A673 (cell line): ENCODE measurements at regions of chr3 and their contacts with region 1.

Region 1: GRCh38 chr3:158845765-158846350 is 44.0 kb downstream of the MFSD1 start:
- DNase-seq: peak; percentile 41
- H3K4me3 ChIP-seq: no peak overlapping the region
- H3K27ac ChIP-seq: no peak overlapping the region
- H3K4me1 ChIP-seq: no peaks in the 10 kb centered on the region
- H3K27me3 ChIP-seq: peaks cover 13% of the 10 kb centered on the region
- CTCF ChIP-seq: peak; percentile 73

Region 2: DNA sequence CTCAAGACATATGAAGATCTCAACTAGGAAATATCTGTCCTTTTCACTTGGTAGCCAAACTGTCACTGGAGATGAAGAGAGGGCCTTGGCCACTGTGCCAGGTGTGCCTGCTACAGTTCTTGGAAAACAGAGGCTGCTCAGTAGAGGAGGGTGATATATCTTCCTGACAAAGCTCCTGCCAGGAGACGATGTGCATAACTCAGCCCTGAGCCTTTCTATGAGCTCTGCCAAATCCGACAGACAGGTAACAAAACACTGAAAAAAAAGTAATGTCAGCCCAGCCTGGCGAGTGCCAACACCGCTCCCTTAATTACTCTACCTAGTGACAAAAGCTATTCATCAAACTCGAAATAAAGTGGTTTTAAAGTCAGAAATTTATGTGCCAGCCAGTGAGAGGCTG is 79.2 kb after region 1 on chr3:
- CTCF ChIA-PET with region 1: no interaction called
- POLR2A ChIA-PET with region 1: no interaction called
- intact Hi-C with region 1: no loop called
- DNase-seq: no peak
- H3K4me3 ChIP-seq: no peak overlapping the region
- H3K27ac ChIP-seq: no peak overlapping the region
- H3K4me1 ChIP-seq: no peaks in the 10 kb centered on the region
- H3K27me3 ChIP-seq: no peaks in the 10 kb centered on the region
- CTCF ChIP-seq: no peak

Region 3: DNA sequence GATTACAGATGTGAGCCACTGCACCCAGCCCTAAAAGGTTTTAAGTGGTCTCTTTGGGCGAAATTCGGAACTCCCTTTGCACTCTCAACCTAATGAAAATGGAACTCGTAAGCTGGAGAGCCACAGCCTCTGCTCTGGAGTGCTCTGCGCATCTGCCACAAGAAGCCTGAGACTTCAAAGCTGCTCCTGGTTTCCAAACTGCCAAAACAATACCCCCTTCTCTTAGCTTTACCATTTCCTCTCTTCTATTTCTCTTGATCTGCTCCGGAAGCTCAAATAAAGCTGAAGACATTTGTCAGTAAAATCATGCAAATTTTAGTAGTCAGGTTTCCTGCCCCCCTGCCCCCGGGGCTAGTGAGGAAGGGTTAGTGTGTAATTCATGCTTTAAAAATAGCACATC is 268.7 kb after region 1 on chr3:
- CTCF ChIA-PET with region 1: no interaction called
- POLR2A ChIA-PET with region 1: no interaction called
- intact Hi-C with region 1: no loop called
- DNase-seq: peak; percentile 5
- H3K4me3 ChIP-seq: no peak overlapping the region
- H3K27ac ChIP-seq: no peak overlapping the region
- H3K4me1 ChIP-seq: no peaks in the 10 kb centered on the region
- H3K27me3 ChIP-seq: peaks cover 3% of the 10 kb centered on the region
- CTCF ChIP-seq: no peak

Region 4: DNA sequence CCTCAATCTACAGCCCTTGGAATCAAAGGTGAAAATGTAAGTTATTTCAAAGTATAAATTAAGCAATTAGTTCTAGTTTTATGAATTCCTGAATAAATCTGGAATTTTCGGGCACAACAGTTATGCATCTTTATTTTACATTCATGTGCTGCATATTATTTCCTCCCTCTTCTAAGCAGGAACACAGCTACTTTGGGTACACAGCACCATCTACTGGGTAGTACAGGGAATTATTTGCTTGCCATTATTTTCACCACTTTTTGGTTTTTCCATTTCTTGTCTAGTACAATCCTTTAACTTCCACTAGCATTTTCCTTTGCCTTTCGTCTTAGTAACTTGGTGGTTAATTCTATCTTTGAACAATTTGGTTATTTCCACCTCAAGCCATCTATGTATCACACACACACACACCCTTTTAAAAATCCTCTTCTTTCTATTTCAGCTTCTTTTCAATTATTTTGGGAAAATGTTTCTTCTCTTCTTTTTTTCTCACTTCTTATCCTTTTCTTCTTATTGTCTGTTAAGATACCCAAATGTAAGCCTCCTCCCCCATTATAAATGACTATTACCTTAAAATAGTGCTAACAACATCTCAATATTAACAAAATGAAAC is 407.0 kb after region 1 on chr3:
- CTCF ChIA-PET with region 1: no interaction called
- POLR2A ChIA-PET with region 1: no interaction called
- intact Hi-C with region 1: loop called (anchors 2 kb)
- DNase-seq: peak; percentile 55
- H3K4me3 ChIP-seq: no peak overlapping the region
- H3K27ac ChIP-seq: no peak overlapping the region
- H3K4me1 ChIP-seq: no peaks in the 10 kb centered on the region
- H3K27me3 ChIP-seq: peaks cover 15% of the 10 kb centered on the region
- CTCF ChIP-seq: peak; percentile 70

Region 5: DNA sequence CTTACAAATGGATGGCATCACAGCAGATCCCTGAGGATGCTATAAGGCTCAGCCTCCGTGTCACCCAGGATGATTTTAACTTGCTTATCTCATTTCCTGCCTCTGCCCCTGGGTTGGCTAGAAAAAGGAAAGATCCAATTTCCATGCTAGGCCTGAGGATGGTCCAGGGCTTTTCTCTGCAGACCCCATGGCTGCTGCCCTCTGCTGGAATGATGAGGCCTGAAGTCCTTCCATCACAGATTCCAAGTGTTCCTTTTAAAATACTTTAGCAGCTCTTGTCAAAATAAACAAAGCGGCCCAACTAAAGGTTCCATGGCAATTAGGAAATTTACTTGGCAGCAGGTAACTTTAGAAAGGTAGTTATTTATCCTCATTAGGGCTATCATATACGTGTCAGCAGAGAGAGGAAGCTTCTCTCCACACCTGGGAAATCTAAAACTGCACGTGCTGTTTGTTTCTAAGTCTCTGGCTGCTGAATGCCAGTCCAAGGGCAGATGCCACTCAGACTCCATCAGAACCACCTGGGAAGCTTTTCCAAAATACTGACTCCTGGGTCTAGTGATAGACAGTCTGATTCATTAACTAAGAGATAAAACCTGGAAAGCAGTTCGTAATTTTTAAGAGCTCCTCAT is 740.8 kb after region 1 on chr3:
- CTCF ChIA-PET with region 1: no interaction called
- POLR2A ChIA-PET with region 1: no interaction called
- intact Hi-C with region 1: loop called (anchors 10 kb)
- DNase-seq: peak; percentile 53
- H3K4me3 ChIP-seq: no peak overlapping the region
- H3K27ac ChIP-seq: no peak overlapping the region
- H3K4me1 ChIP-seq: no peaks in the 10 kb centered on the region
- H3K27me3 ChIP-seq: no peaks in the 10 kb centered on the region
- CTCF ChIP-seq: peak; percentile 62

Region 6: DNA sequence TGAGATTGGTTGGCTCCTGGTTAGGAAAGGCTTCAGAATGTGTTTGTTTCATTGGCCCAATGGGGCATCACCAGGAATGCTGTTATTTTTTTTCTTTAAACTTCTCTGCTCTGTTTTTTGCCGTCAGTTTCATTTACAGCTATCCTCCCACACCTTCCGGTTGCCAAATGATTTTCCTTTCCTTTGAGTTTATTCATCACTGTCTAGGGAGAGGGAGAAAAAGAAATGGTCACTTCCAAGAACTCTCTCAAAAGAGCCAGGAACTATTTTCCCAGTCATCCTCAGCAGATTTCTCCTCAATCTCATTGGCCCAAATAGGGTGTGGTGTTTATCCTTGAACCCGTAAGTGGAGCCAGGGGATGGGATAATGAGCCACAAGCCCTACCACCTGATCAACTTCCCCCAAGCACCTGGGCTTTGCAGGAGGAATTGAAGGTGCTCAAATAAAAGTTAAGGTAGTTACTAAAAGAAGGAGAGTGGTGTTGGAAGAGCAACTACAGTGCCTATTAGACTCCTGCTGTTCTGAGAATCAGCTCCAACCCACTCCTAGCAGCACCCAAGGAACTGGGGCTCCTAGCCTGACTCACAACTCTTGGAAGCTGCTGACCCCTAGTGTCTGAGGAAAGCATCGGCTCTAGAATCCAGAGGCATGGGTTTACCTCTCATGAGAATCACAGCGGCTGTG is 959.0 kb after region 1 on chr3:
- CTCF ChIA-PET with region 1: interaction called, 3 read pairs
- POLR2A ChIA-PET with region 1: no interaction called
- intact Hi-C with region 1: loop called (anchors 10 kb)
- DNase-seq: peak; percentile 90
- H3K4me3 ChIP-seq: no peak overlapping the region
- H3K27ac ChIP-seq: no peak overlapping the region
- H3K4me1 ChIP-seq: no peaks in the 10 kb centered on the region
- H3K27me3 ChIP-seq: no peaks in the 10 kb centered on the region
- CTCF ChIP-seq: peak; percentile 93